ENCODE measurements at regions of chr6 and their contacts with region 1.

Region 1: DNA sequence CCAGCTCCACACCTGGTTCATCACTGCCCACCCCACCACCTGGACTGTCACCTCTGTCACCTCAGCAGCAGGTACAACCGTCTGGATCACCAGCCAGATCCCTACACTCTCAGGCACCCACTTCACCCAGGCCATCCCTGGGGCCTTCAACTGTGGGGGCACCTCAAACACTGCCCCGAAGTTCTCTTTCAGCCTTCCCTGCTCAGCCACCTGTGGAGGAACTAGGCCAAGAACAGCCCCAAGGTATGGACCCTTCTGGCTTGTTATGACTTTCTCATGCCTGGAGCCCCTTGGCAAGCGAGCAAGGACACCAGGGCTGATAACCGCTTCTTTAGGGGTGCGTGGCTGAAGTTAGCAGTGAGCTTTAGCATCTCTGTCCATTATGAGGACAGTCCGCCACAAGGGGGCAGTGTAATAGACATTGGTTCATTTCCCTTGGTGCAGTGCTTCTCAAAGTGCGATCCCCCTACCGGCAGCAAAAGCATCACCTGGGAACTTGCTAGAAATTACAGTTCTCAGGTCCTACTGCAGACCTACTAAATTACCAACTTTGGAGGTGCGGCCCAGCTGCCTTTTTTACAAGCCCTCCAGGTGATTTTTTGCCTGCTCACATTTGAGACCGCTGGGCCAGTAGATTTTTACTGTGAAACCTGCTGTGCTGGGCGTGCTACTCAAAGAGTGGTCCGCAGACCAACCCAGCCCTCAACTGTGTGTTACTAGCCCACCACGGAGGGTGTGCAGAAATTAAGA is 32.5 kb downstream of the PNPLA1 start:
- DNase-seq: peak; percentile 80
- ATAC-seq: peak; percentile 99
- H3K4me3 ChIP-seq: no peak overlapping the region
- H3K27ac ChIP-seq: no peak overlapping the region
- H3K4me1 ChIP-seq: no peaks in the 10 kb centered on the region
- H3K27me3 ChIP-seq: no peaks in the 10 kb centered on the region
- CTCF ChIP-seq: peak; percentile 96

Region 2: DNA sequence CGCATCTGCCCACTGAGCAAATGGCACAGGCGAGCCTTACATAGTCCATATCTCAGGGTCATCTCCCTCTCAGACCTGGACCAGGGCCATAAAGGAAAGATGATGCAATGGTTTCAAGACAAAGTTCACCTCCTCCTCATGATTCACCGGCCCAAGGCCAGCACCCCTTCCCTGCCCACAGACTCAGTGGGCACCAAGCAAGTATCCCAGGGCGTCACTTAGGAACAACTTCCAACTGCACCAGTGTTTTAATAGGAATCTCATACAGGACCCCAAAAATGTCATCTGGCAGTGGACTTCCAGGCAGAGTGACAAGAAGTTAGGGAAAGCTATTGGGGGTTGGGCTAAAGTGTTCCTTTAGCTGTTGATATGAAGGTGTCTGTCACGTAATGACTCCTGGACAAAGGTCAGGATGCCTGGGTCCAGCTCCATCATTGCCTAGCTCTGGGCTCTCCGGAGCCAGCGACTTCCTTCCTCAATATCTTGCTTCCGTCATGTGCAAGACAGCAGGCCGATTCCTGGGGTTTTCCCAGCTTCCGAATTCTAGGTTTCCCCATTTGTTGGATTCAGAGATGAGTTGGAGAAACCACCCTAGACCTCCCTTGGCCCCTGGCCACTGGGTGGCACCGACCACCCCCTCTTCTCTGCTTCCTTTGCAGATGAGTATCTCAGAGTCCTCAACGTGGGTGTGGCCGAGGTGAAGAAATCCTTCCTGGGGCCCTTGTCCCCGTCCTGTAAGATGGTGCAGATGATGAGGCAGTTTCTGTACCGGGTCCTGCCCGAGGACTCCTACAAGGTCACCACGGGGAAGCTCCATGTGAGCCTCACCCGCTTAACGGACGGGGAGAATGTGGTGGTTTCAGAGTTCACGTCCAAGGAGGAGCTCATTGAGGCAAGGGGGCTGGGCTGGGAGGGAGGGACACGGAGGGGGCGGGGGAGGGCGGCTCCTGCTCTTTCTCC is 11.5 kb before region 1 on chr6:
- CTCF ChIA-PET with region 1: interaction called, 10 read pairs
- POLR2A ChIA-PET with region 1: no interaction called
- in situ Hi-C with region 1: no loop called
- intact Hi-C with region 1: no loop called
- DNase-seq: no peak
- ATAC-seq: no peak
- H3K4me3 ChIP-seq: no peak overlapping the region
- H3K27ac ChIP-seq: no peak overlapping the region
- H3K4me1 ChIP-seq: no peaks in the 10 kb centered on the region
- H3K27me3 ChIP-seq: no peaks in the 10 kb centered on the region
- CTCF ChIP-seq: no peak

Measured in Panc1 (cell line).